Caco-2 (cell line): ENCODE measurements at regions of chr2 and their contacts with region 1.

Region 1: DNA sequence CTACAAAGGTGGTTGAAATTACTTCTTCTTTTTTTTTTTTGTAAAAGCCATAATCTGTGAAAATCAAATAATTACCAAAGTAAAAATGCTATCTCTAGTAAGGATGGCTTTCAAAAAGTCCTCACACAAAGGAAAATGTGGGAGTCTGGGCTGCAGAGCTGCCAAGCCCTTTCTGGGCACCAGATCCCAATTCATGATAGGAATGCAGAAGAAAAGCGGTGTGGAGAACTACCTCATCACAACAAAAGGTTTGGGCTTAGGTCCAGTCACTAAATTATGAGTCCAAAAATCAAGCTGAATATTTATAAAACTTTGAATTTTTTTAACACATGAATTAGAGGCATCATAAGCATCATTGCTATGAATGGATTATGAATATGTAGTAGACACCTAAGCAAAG is 30.8 kb upstream of the EPHA4 start:
- DNase-seq: no peak
- H3K4me3 ChIP-seq: no peak overlapping the region
- H3K4me3 Mint-ChIP-seq: no peak overlapping the region
- H3K27ac Mint-ChIP-seq: no peak overlapping the region
- H3K4me1 ChIP-seq: peaks cover 59% of the 10 kb centered on the region
- H3K4me1 Mint-ChIP-seq: peaks cover 21% of the 10 kb centered on the region
- H3K27me3 ChIP-seq: no peaks in the 10 kb centered on the region
- H3K27me3 Mint-ChIP-seq: no peaks in the 10 kb centered on the region
- CTCF ChIP-seq: no peak

Region 2: DNA sequence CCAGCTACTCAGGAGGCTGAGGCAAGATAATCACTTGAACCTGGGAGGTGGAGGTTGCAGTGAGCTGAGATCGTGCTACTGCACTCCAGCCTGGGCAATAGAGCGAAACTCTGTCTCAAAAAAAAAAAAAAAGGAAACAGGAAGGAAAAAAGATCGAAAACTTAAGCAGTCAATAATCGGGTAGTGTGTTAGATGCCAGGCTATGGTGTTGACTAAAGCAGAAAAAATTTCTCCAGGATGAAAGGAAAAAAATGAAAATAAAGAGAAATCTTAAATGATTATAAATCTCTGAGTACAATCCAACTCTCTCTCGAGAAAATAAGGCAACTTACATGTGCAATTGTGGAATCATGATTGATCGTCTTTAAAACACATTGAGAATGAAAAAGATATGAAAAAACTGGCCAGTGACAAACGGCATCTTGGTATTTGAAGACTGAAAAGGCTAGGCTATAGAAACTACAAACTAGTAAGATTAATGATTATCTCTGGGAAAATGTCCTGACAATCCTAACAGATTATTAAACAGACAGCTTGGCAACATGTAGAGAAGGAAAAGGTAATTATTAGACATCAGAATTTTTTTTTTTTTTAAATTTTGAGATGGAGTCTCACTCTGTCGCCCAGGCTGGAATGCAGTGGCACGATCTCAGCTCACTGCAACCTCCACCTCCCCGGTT is 14.5 kb before region 1 on chr2:
- CTCF ChIA-PET with region 1: interaction called, 3 read pairs
- POLR2A ChIA-PET with region 1: no interaction called
- intact Hi-C with region 1: loop called (anchors 1 kb)
- DNase-seq: no peak
- H3K4me3 ChIP-seq: no peak overlapping the region
- H3K4me3 Mint-ChIP-seq: peak overlapping the region; percentile 13
- H3K27ac Mint-ChIP-seq: peak overlapping the region; percentile 80
- H3K4me1 ChIP-seq: peaks cover 50% of the 10 kb centered on the region
- H3K4me1 Mint-ChIP-seq: peaks cover 38% of the 10 kb centered on the region
- H3K27me3 ChIP-seq: no peaks in the 10 kb centered on the region
- H3K27me3 Mint-ChIP-seq: no peaks in the 10 kb centered on the region
- CTCF ChIP-seq: no peak

Region 3: DNA sequence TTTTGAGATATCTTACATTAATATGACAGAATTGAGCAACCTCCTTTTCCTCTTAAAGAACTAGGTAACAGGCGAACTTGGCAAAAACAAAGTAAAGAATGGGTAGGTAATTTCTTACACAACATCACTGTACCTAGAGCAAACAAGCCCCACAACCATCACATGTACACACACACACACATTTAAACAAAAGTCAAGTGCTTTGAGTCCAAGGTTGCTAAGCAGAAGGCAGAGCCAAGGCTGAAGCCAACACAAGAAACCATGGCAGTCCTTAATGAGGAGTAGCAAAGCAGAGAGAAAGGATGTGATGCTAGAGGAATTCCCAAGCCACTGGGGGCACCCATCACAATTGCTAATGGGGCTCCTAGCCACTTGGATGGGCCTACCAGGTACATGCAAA is 531.7 kb after region 1 on chr2:
- CTCF ChIA-PET with region 1: no interaction called
- POLR2A ChIA-PET with region 1: no interaction called
- intact Hi-C with region 1: no loop called
- DNase-seq: no peak
- H3K4me3 ChIP-seq: no peak overlapping the region
- H3K4me3 Mint-ChIP-seq: no peak overlapping the region
- H3K27ac Mint-ChIP-seq: no peak overlapping the region
- H3K4me1 ChIP-seq: no peaks in the 10 kb centered on the region
- H3K4me1 Mint-ChIP-seq: no peaks in the 10 kb centered on the region
- H3K27me3 ChIP-seq: no peaks in the 10 kb centered on the region
- H3K27me3 Mint-ChIP-seq: peaks cover 29% of the 10 kb centered on the region
- CTCF ChIP-seq: no peak